Natural killer cell (primary cell): ENCODE measurements at regions of chr2 and their contacts with region 1.

Region 1: DNA sequence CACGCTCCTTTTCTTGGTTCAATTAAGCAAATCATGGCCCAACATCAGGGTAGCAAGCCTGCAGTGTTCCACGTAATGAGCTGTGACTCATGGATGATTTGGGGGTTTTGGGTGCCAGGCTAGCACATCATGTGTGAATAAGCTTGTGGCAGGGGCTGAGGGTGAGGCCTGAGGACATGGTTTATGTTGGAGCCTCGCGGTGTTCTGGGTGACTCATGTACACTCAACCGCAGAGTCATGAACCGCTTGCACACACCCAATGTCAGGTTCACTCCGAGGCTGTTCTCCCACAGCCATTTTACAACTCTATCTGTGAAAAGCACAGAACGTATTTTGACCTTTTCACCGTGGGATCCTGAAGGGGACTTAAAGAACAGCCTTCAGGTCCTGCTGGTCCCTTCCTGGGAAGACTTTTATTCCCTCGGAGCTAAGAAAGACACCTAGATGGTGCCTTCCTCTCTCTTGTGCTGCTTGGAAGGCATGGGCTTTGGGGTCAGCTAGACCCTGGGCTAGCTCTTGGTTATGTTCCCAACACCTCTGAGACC is 139.9 kb upstream of the ZEB2 start:
- DNase-seq: peak; percentile 82 to 84
- ATAC-seq: peak; percentile 85 to 96 (median 93)
- H3K4me3 ChIP-seq: no peak overlapping the region
- H3K4me3 Mint-ChIP-seq: peak overlapping the region; percentile 66
- H3K27ac ChIP-seq: peak overlapping the region; percentile 96
- H3K27ac Mint-ChIP-seq: peak overlapping the region; percentile 89 to 94
- H3K4me1 ChIP-seq: peaks cover 24% of the 10 kb centered on the region
- H3K4me1 Mint-ChIP-seq: peaks cover 40 to 48% of the 10 kb centered on the region in 2 donors
- H3K27me3 ChIP-seq: no peaks in the 10 kb centered on the region
- H3K27me3 Mint-ChIP-seq: no peaks in the 10 kb centered on the region
- CTCF ChIP-seq: no peak

Region 2: DNA sequence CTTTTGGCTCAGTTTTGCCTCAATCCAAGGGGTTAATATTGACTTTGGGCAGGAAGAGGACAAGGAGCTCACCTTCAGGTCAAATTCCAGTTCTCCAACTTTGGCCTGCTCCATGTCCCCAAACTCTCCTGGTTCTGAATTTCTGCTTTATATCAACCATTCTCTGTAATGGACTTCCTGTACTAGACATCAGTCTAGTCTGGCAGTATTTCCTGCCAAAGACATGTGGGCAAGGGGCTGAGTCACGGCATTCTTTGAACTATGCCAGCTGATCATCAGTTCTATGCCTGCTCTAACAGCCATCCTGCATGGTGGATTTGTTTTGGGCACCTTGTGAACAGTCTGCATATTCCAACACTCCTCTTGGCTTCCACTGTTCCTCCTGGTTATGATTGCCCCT is 339.3 kb before region 1 on chr2:
- intact Hi-C with region 1: loop called (anchors 10 kb)
- DNase-seq: peak; percentile 28 to 80
- ATAC-seq: peak; percentile 75 to 87 (median 84)
- H3K4me3 ChIP-seq: no peak overlapping the region
- H3K4me3 Mint-ChIP-seq: peak overlapping the region; percentile 52
- H3K27ac ChIP-seq: peak overlapping the region; percentile 32
- H3K27ac Mint-ChIP-seq: peak overlapping the region; percentile 74 to 90
- H3K4me1 ChIP-seq: peaks cover 9% of the 10 kb centered on the region
- H3K4me1 Mint-ChIP-seq: peaks cover 38 to 48% of the 10 kb centered on the region in 2 donors
- H3K27me3 ChIP-seq: no peaks in the 10 kb centered on the region
- H3K27me3 Mint-ChIP-seq: no peaks in the 10 kb centered on the region
- CTCF ChIP-seq: no peak

Region 3: GRCh38 chr2:144456680-144457079 is 203.1 kb before region 1 on chr2:
- intact Hi-C with region 1: loop called (anchors 2 kb)
- DNase-seq: peak; percentile 45 to 63
- ATAC-seq: peak; percentile 54 to 73 (median 55)
- H3K4me3 ChIP-seq: no peak overlapping the region
- H3K4me3 Mint-ChIP-seq: peak overlapping the region; percentile 47
- H3K27ac ChIP-seq: peak overlapping the region; percentile 99
- H3K27ac Mint-ChIP-seq: peak overlapping the region in 1 of 2 donors; percentile 86
- H3K4me1 ChIP-seq: peaks cover 46% of the 10 kb centered on the region
- H3K4me1 Mint-ChIP-seq: peaks cover 93 to 96% of the 10 kb centered on the region in 2 donors
- H3K27me3 ChIP-seq: no peaks in the 10 kb centered on the region
- H3K27me3 Mint-ChIP-seq: no peaks in the 10 kb centered on the region
- CTCF ChIP-seq: no peak

Region 4: DNA sequence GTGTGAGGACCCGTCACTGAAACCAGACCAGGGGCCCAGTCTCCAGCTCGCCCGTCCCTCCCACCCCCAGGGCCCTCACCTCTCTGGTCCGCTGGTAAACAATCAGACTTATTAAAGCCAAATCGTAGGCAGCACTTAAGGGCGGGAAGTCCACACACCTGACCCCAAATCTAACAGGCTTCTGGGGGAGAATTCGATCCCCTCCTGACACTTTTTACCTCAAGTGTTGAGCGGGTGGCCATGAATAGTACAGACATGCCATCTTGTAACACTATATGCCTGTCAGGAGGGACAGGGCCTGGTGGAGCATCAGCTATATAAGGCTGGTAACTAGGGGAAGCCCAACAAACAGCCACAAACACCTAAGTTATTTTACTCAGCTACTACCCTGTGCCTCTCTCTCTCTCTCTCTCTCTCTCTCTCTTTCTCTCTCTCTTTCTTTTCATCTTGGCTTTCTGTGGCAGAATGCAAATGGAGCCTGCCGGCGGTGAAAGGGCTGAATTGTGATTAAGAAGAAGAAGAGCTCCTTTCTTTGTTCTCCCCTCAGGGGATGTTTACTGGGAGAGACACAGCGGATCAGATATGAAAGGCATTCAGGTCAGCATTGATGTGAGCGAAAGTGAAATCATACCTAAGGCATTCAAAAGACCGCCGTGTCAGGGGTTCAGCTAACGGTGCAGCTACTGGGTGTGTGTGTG is 149.4 kb before region 1 on chr2:
- intact Hi-C with region 1: loop called (anchors 2 kb)
- DNase-seq: peak; percentile 69 to 84
- ATAC-seq: peak; percentile 59 to 80 (median 69)
- H3K4me3 ChIP-seq: peak overlapping the region; percentile 39
- H3K4me3 Mint-ChIP-seq: peak overlapping the region; percentile 95
- H3K27ac ChIP-seq: peak overlapping the region; percentile 92
- H3K27ac Mint-ChIP-seq: no peak overlapping the region
- H3K4me1 ChIP-seq: peaks cover 62% of the 10 kb centered on the region
- H3K4me1 Mint-ChIP-seq: peaks cover 94 to 97% of the 10 kb centered on the region in 2 donors
- H3K27me3 ChIP-seq: no peaks in the 10 kb centered on the region
- H3K27me3 Mint-ChIP-seq: peaks cover 4 to 7% of the 10 kb centered on the region in 2 donors
- CTCF ChIP-seq: no peak

Region 5: GRCh38 chr2:144516981-144517865 is 142.6 kb before region 1 on chr2:
- intact Hi-C with region 1: loop called (anchors 2 kb)
- DNase-seq: peak; percentile 67 to 80
- ATAC-seq: peak; percentile 54 to 75 (median 68)
- H3K4me3 ChIP-seq: peak overlapping the region; percentile 85
- H3K4me3 Mint-ChIP-seq: no peak overlapping the region
- H3K27ac ChIP-seq: peak overlapping the region; percentile 99
- H3K27ac Mint-ChIP-seq: no peak overlapping the region
- H3K4me1 ChIP-seq: peaks cover 28% of the 10 kb centered on the region
- H3K4me1 Mint-ChIP-seq: peaks cover 39% of the 10 kb centered on the region in 2 donors
- H3K27me3 ChIP-seq: no peaks in the 10 kb centered on the region
- H3K27me3 Mint-ChIP-seq: peaks cover 0 to 5% of the 10 kb centered on the region in 2 donors
- CTCF ChIP-seq: no peak

Region 6: DNA sequence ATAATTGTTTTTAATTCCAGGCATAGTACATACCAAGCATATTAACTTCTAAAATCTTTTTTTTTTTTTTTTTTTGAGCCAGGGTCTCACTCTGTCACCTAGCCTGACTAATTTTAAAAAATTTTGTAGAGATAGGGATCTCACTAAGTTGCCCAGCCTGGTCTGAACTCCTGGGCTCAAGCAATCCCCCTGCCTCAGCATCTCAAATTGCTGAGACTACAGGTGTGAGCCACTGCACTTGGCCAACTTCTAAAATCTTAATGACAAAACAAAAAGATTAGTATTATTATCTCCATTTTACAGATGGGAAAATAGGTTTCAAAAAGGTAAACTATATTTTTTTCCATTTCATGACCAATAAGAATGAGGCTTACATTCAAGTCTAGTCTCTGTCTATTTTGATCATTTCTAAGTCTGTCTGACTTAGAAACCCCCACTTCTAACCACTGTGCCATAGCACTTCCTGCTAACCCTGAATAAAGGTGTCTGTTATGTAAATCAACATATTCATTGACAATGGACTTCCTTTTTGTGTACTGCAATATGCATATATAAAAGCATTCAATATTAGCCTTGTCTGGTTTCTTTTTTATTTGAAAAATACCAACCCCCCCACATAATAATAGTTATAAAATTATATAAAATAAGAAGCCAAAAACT is 111.1 kb before region 1 on chr2:
- intact Hi-C with region 1: loop called (anchors 1 kb)
- DNase-seq: peak in 1 of 2 donors; percentile 71
- ATAC-seq: peak; percentile 97 to 100 (median 98)
- H3K4me3 ChIP-seq: no peak overlapping the region
- H3K4me3 Mint-ChIP-seq: peak overlapping the region; percentile 13
- H3K27ac ChIP-seq: no peak overlapping the region
- H3K27ac Mint-ChIP-seq: peak overlapping the region; percentile 52 to 85
- H3K4me1 ChIP-seq: peaks cover 4% of the 10 kb centered on the region
- H3K4me1 Mint-ChIP-seq: peaks cover 5 to 12% of the 10 kb centered on the region in 2 donors
- H3K27me3 ChIP-seq: no peaks in the 10 kb centered on the region
- H3K27me3 Mint-ChIP-seq: no peaks in the 10 kb centered on the region
- CTCF ChIP-seq: no peak

Region 7: GRCh38 chr2:144583741-144584453 is 75.9 kb before region 1 on chr2:
- intact Hi-C with region 1: loop called (anchors 5 kb)
- DNase-seq: peak in 1 of 2 donors; percentile 3
- ATAC-seq: peak in 1 of 3 donors; percentile 24
- H3K4me3 ChIP-seq: no peak overlapping the region
- H3K4me3 Mint-ChIP-seq: peak overlapping the region; percentile 79
- H3K27ac ChIP-seq: peak overlapping the region; percentile 42
- H3K27ac Mint-ChIP-seq: peak overlapping the region; percentile 50 to 74
- H3K4me1 ChIP-seq: peaks cover 32% of the 10 kb centered on the region
- H3K4me1 Mint-ChIP-seq: peaks cover 52% of the 10 kb centered on the region in 2 donors
- H3K27me3 ChIP-seq: no peaks in the 10 kb centered on the region
- H3K27me3 Mint-ChIP-seq: no peaks in the 10 kb centered on the region
- CTCF ChIP-seq: no peak